ENCODE measurements at regions of chr10 and their contacts with region 1.

Region 1: GRCh38 chr10:103564776-103565520 is 71.4 kb downstream of the NEURL1 start:
- DNase-seq: peak; percentile 42
- H3K4me3 Mint-ChIP-seq: no peak overlapping the region
- H3K27ac Mint-ChIP-seq: no peak overlapping the region
- H3K4me1 Mint-ChIP-seq: no peaks in the 10 kb centered on the region
- H3K27me3 Mint-ChIP-seq: peaks cover 17% of the 10 kb centered on the region
- CTCF ChIP-seq: peak; percentile 81

Region 2: DNA sequence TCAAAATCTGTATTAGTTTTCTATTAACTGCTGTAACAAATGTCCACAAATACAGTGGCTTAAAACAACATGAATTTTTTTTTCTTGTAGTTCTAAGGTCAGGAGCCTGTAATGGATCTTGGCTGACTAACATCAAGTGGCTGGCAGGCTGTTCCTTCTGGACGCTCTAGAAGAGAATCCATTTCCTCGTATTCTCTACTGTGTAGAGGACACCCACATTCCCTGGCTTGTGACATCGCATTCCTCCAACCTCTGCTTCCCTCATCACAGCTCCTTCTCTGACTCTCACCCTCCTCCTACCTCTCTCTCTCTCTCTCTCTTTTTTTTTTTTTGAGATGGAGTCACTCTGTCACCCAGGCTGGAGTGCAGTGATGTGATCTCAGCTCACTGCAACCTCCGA is 101.4 kb before region 1 on chr10:
- CTCF ChIA-PET with region 1: no interaction called
- POLR2A ChIA-PET with region 1: no interaction called
- intact Hi-C with region 1: no loop called
- DNase-seq: no peak
- H3K4me3 Mint-ChIP-seq: no peak overlapping the region
- H3K27ac Mint-ChIP-seq: no peak overlapping the region
- H3K4me1 Mint-ChIP-seq: no peaks in the 10 kb centered on the region
- H3K27me3 Mint-ChIP-seq: peaks cover 16% of the 10 kb centered on the region
- CTCF ChIP-seq: no peak

Region 3: DNA sequence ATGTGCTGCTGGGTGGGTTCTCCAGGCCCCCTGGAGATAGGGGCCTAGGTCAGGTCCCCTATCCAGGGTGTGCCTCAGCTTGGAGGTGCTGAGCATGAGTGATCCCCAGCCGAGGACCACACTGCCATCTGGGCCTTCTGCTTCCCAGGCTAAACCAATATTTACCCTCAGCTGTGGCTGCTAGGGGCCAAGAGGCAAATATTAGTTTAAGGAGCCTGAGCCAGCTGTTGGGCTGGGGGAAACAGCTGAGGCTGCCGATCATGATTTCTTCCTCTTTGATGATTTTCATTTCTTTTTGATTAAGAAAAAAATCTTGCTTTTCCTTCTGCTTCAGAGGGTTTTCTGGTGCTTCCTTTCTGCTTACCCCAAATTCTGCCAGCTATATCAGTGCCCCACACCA is 11.9 kb after region 1 on chr10:
- CTCF ChIA-PET with region 1: interaction called, 12 read pairs
- POLR2A ChIA-PET with region 1: no interaction called
- intact Hi-C with region 1: no loop called
- DNase-seq: no peak
- H3K4me3 Mint-ChIP-seq: no peak overlapping the region
- H3K27ac Mint-ChIP-seq: no peak overlapping the region
- H3K4me1 Mint-ChIP-seq: no peaks in the 10 kb centered on the region
- H3K27me3 Mint-ChIP-seq: peaks cover 12% of the 10 kb centered on the region
- CTCF ChIP-seq: no peak